AG04450 (cell line): ENCODE measurements at regions of chr2 and their contacts with region 1.

Region 1: DNA sequence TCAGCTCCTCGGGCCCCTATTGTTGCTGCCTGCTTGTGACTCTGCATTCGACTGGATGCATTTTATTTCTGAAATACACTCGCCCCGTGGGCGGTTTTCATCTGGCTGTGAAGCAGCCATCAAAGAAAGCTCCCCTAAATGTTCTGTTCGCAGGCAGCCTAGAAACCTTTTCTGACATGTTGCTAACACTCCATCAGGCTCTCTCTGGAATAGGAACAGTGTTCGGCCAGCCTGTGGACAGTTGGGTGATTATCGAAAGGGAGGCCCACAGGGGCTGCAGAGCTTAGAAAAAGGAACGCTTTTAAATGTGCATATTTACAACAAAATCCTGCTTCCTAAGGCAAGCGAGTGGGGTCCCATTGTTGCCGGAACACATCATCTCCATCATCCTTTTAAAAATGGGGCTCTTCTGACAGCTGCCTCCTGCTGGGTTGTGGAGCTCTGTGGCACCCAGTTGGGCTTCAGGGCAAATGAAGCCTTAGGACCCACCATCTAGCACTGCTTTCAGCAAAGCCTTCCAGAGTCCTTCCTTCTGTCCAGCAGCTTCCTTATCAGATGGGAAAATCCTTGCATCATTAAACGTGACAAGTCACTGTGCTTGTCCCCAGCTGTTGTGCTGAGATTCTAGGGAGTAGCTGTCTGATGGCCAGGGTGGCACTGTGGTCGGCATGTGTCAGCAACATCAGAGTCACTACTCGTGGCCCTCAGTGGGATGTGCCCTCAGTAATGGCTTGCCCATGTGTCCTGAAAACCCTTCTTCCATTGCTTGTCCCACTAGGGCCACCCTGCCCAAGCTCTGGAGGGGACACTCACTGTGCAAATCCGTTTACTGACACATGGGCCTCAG is 102.6 kb downstream of the GBX2 start:
- DNase-seq: no peak
- H3K4me3 ChIP-seq: no peak overlapping the region
- H3K27ac ChIP-seq: no peak overlapping the region
- H3K27me3 ChIP-seq: no peaks in the 10 kb centered on the region
- CTCF ChIP-seq: no peak

Region 2: DNA sequence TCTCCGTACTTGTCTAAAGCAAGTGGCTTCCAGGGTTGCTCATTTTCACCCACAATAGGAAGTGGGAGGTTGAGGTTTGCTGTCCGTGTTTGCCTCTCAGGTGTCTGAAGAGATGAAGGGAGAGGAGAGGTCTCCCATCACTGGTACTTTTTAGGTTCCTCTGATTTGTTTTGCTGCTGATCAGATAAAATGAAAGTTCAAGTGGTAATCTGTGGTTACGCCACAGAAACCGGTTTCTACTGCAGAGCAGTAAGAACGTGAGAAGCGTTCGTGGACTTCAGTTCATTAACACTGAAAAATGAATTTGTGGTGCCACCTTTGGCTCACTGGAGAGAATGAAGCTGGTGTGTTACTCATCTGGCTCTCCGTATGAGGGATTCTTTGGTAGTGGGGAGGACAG is 15.6 kb before region 1 on chr2:
- CTCF ChIA-PET with region 1: no interaction called
- POLR2A ChIA-PET with region 1: no interaction called
- DNase-seq: no peak
- H3K4me3 ChIP-seq: no peak overlapping the region
- H3K27ac ChIP-seq: no peak overlapping the region
- H3K27me3 ChIP-seq: no peaks in the 10 kb centered on the region
- CTCF ChIP-seq: no peak

Region 3: DNA sequence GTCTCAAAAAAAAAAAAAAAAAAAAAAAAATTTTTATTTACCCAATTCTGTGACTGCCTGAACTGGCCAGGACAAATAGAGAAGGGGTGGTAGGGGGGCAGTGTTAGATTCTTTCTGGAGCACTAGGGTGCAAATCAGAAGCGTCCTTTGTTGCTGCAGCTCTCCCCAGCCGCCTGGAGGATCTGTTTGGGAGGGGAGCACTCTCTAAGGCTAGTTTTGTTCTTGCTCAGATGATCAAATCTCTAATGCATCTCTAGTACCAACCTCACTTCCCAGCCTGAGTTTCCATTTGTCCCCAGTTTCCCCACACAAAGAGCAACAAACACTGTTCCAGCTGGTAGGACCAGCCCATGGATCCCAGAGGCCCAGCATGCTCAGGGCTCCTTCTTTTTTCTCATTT is 19.7 kb after region 1 on chr2:
- CTCF ChIA-PET with region 1: interaction called, 10 read pairs
- POLR2A ChIA-PET with region 1: no interaction called
- DNase-seq: no peak
- H3K4me3 ChIP-seq: no peak overlapping the region
- H3K27ac ChIP-seq: no peak overlapping the region
- H3K27me3 ChIP-seq: no peaks in the 10 kb centered on the region
- CTCF ChIP-seq: no peak

Region 4: GRCh38 chr2:236193051-236193450 is 127.5 kb after region 1 on chr2:
- CTCF ChIA-PET with region 1: no interaction called
- POLR2A ChIA-PET with region 1: no interaction called
- DNase-seq: no peak
- H3K4me3 ChIP-seq: no peak overlapping the region
- H3K27ac ChIP-seq: no peak overlapping the region
- H3K27me3 ChIP-seq: no peaks in the 10 kb centered on the region
- CTCF ChIP-seq: no peak